GM12878 (cell line): ENCODE measurements at regions of chr19 and their contacts with region 1.

Region 1: GRCh38 chr19:38049105-38049649 is 142.2 kb downstream of the SIPA1L3 start:
- DNase-seq: peak; percentile 93
- ATAC-seq: peak; percentile 54
- H3K4me3 ChIP-seq: peak overlapping the region; percentile 57
- H3K27ac ChIP-seq: peak overlapping the region; percentile 99
- H3K4me1 ChIP-seq: peaks cover 54% of the 10 kb centered on the region
- H3K27me3 ChIP-seq: no peaks in the 10 kb centered on the region
- CTCF ChIP-seq: peak in 1 of 3 experiments; percentile 6; a peak in 1 of 6 replicates
- EP300 ChIP-seq: peak; percentile 21 to 26; a peak in 1 of 4 replicates
- POLR2A ChIP-seq: peak; percentile 86
- RAD21 ChIP-seq: 0 out of 2 replicates have a peak, but pooled peaks have one; percentile 10

Region 2: DNA sequence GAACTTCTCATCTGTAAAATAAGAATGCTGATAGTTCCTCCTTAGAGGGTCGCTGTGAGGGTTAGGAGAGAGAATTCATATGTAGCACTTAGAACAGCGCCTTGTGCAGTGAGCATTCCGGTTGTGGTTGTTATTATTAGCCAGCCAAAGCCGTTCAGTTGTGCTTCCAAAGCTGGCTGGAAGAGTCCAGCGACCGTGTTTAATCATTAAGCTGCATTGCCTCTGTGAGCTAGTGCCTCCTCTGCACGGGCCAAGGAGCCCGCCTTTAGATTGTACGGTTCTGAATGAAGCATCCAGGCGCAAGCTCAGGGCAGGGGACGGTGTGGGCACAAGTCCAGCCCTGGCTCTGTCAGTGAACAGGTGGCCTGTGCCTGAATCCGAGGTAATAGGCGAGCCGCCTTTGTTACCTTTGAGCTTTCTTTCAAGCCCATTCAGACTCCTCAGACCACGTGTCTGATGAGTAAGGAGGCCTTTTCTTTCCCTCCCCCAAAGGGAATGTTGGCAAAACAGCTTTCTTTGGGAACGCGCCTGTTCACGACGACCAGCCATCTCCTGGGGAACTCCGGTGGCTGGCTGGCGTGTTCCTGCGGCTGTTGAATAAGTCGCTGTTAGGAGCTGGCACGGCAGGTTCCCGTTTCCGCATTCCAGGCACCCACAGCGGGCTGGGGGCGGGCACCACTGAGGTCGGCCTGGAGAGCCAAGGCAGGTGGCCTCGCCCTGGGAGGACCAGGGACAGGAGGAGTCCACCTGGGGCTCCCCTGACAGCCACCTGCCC is 117.1 kb before region 1 on chr19:
- CTCF ChIA-PET with region 1: interaction called, 3 read pairs
- POLR2A ChIA-PET with region 1: interaction called, 10 read pairs
- RAD21 ChIA-PET with region 1: interaction called, 18 read pairs
- SMC1A ChIA-PET with region 1: interaction called, 34 read pairs
- in situ Hi-C with region 1: no loop called
- intact Hi-C with region 1: no loop called
- DNase-seq: no peak
- ATAC-seq: peak; percentile 70
- H3K4me3 ChIP-seq: peak overlapping the region; percentile 69
- H3K27ac ChIP-seq: peak overlapping the region; percentile 87
- H3K4me1 ChIP-seq: peaks cover 46% of the 10 kb centered on the region
- H3K27me3 ChIP-seq: no peaks in the 10 kb centered on the region
- CTCF ChIP-seq: 0 out of 6 replicates have a peak, but pooled peaks of 1 of the 3 experiments have one; percentile 10
- EP300 ChIP-seq: no peak
- POLR2A ChIP-seq: peak; percentile 55
- RAD21 ChIP-seq: no peak

Region 3: DNA sequence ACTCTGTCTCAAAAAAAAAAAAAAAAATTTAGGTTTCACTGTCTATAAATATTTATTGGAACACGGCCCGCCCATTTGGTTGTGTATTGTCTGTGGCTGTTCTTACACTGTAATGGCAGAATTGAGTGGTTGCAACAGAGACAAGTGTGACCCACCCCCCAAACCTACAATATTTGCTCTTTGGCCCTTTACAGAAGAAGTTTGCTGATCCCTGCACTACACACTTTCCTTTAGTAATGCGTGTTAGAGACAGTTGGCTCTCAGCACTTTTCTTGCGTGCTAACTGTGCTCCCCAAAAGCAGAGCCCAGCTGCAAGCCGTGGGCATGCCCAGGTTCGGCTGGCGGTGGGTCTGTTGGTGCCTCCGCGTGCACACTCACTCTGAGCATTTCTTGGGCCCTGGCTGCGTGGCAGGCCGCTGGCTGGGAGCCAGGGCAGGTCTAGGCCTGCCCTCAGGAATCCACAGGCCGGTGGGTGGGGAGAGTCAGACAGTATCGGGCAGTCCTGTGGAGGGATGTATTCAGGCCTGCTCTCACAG is 69.6 kb before region 1 on chr19:
- CTCF ChIA-PET with region 1: interaction called, 5 read pairs
- POLR2A ChIA-PET with region 1: interaction called, 11 read pairs
- RAD21 ChIA-PET with region 1: interaction called, 19 read pairs
- SMC1A ChIA-PET with region 1: interaction called, 18 read pairs
- in situ Hi-C with region 1: no loop called
- intact Hi-C with region 1: loop called (anchors 2 kb)
- DNase-seq: peak; percentile 69
- ATAC-seq: peak; percentile 46
- H3K4me3 ChIP-seq: peak overlapping the region; percentile 38; the same call in 1 of the 2 replicates
- H3K27ac ChIP-seq: peak overlapping the region; percentile 95
- H3K4me1 ChIP-seq: peaks cover 58% of the 10 kb centered on the region
- H3K27me3 ChIP-seq: no peaks in the 10 kb centered on the region
- CTCF ChIP-seq: no peak
- EP300 ChIP-seq: no peak
- POLR2A ChIP-seq: peak; percentile 57; the same call in 1 of the 2 replicates
- RAD21 ChIP-seq: no peak

Region 4: GRCh38 chr19:38004521-38005223 is 44.5 kb before region 1 on chr19:
- CTCF ChIA-PET with region 1: interaction called, 12 read pairs
- POLR2A ChIA-PET with region 1: interaction called, 36 read pairs
- RAD21 ChIA-PET with region 1: interaction called, 122 read pairs
- SMC1A ChIA-PET with region 1: interaction called, 102 read pairs
- in situ Hi-C with region 1: no loop called
- intact Hi-C with region 1: loop called (anchors 2 kb)
- DNase-seq: peak; percentile 95
- ATAC-seq: peak; percentile 87
- H3K4me3 ChIP-seq: peak overlapping the region; percentile 63
- H3K27ac ChIP-seq: peak overlapping the region; percentile 89
- H3K4me1 ChIP-seq: peaks cover 57% of the 10 kb centered on the region
- H3K27me3 ChIP-seq: no peaks in the 10 kb centered on the region
- CTCF ChIP-seq: no peak
- EP300 ChIP-seq: no peak
- POLR2A ChIP-seq: peak; percentile 80
- RAD21 ChIP-seq: no peak

Region 5: GRCh38 chr19:38061294-38061693 is 12.1 kb after region 1 on chr19:
- CTCF ChIA-PET with region 1: interaction called, 14 read pairs
- POLR2A ChIA-PET with region 1: interaction called, 15 read pairs
- RAD21 ChIA-PET with region 1: interaction called, 13 read pairs
- SMC1A ChIA-PET with region 1: interaction called, 15 read pairs
- in situ Hi-C with region 1: no loop called
- intact Hi-C with region 1: no loop called
- DNase-seq: no peak
- ATAC-seq: no peak
- H3K4me3 ChIP-seq: no peak overlapping the region
- H3K27ac ChIP-seq: no peak overlapping the region
- H3K4me1 ChIP-seq: peaks cover 29% of the 10 kb centered on the region
- H3K27me3 ChIP-seq: no peaks in the 10 kb centered on the region
- CTCF ChIP-seq: no peak
- EP300 ChIP-seq: no peak
- POLR2A ChIP-seq: no peak
- RAD21 ChIP-seq: no peak